Activated naive CD4-positive, alpha-beta T cell treated with anti-CD3 and anti-CD28 coated beads for 36 hours (primary cell): ENCODE measurements at regions of chr2 and their contacts with region 1.

Region 1: DNA sequence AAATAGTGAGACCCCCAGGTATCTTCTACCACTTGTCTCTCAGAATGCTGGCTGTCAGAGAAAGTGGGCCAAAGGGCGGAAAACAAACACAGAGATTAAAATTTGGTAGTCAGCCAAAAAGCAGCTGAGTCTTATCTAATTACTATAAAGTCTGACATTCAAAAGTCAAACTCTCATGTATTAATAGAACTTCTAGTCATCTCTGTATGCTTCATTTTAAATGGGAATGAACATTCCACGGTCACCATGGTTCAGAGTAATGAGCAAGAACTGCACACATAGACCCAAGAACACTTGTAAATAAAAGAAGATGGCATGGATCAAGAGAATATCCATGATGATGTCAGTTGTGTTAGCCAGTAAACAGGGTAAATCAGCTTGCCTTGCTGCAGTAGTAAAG is 1267.0 kb upstream of the CHAC2 start:
- DNase-seq: no peak
- H3K4me3 Mint-ChIP-seq: no peak overlapping the region
- H3K27ac Mint-ChIP-seq: no peak overlapping the region
- H3K4me1 Mint-ChIP-seq: no peaks in the 10 kb centered on the region
- H3K27me3 Mint-ChIP-seq: no peaks in the 10 kb centered on the region

Region 2: GRCh38 chr2:52563151-52563550 is 62.6 kb after region 1 on chr2:
- CTCF ChIA-PET with region 1: no interaction called
- intact Hi-C with region 1: loop called (anchors 10 kb)
- DNase-seq: no peak
- H3K4me3 Mint-ChIP-seq: no peak overlapping the region
- H3K27ac Mint-ChIP-seq: no peak overlapping the region
- H3K4me1 Mint-ChIP-seq: no peaks in the 10 kb centered on the region
- H3K27me3 Mint-ChIP-seq: no peaks in the 10 kb centered on the region